Calu3 (cell line): ENCODE measurements at regions of chr9 and their contacts with region 1.

Region 1: DNA sequence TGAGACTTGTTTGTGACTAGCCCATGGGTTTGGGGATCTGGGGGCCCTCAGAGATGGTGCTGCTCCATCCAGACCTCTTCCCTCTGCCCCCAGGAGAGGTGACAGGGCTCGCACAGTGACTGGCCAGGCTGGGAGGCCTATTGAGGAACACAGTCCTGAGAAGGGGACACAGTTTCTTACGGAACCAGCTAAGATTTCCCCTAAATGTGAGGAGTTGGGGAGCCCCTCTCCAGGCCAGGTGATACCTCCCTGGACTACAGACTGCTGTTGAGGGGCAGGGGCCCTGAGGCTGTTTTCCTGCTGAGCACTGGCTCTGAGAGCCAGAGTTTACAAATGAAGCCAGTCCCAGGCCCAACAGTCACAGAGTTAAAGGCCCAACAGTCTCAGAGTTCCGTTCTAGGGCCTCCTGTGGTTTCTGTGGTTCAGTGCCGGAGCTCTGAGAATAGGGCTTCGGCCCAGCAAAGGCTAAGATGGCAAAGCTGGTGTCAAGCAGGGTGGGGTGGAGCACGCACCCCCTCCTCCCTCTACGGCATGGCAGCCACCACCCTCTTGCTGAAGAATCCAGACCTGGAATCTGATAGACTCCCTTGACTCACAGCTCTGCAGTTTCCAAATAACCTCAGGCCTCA is 1.1 kb upstream of the SEMA4D start:
- DNase-seq: no peak
- H3K4me3 Mint-ChIP-seq: peak overlapping the region; percentile 74
- H3K27ac Mint-ChIP-seq: no peak overlapping the region
- H3K4me1 Mint-ChIP-seq: no peaks in the 10 kb centered on the region
- H3K27me3 Mint-ChIP-seq: peaks cover 20% of the 10 kb centered on the region
- CTCF ChIP-seq: no peak

Region 2: DNA sequence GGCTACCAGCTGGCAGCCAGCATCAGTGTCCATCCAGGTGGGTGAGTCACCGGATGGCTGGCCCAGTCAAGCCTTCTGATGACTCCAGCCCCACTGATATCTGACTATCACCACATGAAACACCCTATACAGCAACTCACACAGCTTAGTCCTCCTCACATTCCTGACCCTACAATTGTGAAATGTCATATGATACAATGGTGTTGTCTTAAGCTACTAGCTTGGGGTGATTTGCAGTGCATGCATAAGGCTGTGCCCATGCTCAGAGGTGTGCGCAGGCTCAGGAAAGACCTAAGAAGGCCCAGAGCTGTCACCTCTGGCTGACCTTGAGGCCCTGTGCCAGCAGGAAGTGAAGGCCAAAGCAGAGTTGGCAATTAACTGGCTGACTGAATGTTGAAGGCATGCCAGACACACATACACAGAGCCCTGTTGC is 20.4 kb after region 1 on chr9:
- CTCF ChIA-PET with region 1: interaction called, 14 read pairs
- intact Hi-C with region 1: no loop called
- DNase-seq: peak; percentile 60
- H3K4me3 Mint-ChIP-seq: no peak overlapping the region
- H3K27ac Mint-ChIP-seq: peak overlapping the region; percentile 45
- H3K4me1 Mint-ChIP-seq: peaks cover 18% of the 10 kb centered on the region
- H3K27me3 Mint-ChIP-seq: no peaks in the 10 kb centered on the region
- CTCF ChIP-seq: no peak

Region 3: DNA sequence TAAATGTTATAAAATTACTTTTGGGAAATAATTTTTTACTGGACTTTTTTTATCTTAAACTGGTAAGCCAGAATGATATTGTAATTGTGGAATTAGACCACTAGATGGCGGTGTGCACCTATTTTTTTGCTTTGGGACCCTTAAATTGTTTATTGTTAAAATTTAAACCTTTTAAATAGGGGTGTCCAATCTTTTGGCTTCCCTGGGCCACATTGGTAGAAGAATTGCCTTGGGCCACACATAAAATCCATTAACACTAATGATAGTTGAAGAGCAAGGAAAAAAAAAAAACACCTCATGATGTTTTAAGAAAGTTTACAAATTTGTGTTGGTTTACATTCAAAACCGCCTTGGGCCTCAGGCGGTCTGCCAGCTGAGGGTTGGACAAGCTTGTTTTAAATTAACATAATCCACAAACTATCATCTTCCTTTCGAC is 77.5 kb after region 1 on chr9:
- CTCF ChIA-PET with region 1: no interaction called
- intact Hi-C with region 1: no loop called
- DNase-seq: no peak
- H3K4me3 Mint-ChIP-seq: no peak overlapping the region
- H3K27ac Mint-ChIP-seq: no peak overlapping the region
- H3K4me1 Mint-ChIP-seq: no peaks in the 10 kb centered on the region
- H3K27me3 Mint-ChIP-seq: peaks cover 74% of the 10 kb centered on the region
- CTCF ChIP-seq: peak; percentile 32

Region 4: DNA sequence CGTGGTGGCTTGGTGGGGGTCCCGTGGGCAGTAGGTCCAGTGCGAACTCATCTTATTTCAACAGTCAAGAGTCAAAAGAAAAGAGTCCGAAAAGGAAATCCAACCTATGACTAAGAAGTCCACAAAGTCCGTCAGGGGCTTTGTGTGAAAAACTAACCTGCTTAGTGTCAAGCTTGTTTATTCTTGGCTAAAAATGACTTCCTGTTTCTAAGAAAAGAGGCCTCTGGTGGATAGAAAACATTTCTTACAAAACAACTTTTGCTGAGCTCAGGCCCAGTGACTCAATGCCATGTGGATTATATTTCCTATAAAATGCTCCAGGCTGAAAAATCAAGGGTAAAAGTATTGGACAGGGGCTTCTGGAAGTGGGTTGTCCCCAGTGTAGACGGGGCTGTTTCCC is 211.7 kb after region 1 on chr9:
- CTCF ChIA-PET with region 1: no interaction called
- intact Hi-C with region 1: no loop called
- DNase-seq: no peak
- H3K4me3 Mint-ChIP-seq: no peak overlapping the region
- H3K27ac Mint-ChIP-seq: no peak overlapping the region
- H3K4me1 Mint-ChIP-seq: no peaks in the 10 kb centered on the region
- H3K27me3 Mint-ChIP-seq: peaks cover 62% of the 10 kb centered on the region
- CTCF ChIP-seq: no peak